Mammary epithelial cell (primary cell): ENCODE measurements at regions of chr6 and their contacts with region 1.

Region 1: DNA sequence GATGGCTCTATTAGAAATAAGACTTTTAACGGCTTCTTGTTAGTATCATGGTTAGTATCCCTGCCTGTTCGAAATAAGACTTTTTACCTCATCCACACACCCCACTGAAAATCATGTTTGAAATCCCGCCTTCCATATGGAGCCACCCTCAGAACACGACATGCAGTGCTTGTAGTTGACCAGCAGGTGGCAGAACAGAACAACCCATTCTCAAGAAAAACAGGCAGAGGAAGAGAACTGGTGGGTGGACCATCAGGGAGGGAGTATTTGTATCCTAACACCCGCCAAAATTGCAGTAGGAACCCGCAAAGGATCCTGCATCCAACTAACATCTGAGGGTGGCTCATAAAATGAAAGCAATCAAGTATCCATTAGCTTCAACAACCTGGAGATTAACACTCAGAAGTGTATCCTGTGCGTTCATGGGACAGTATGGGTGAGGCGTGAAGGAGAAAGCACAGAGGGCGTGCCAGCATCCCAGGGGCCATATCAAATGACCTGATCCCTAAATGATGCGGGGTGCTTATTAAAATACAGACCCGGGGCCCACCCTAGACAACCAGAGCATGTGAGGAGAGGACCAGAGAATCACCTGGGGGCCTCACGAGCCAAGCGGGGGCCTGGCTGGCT is 89.6 kb upstream of the NHSL1 start:
- DNase-seq: peak; percentile 55
- H3K4me3 ChIP-seq: no peak overlapping the region
- H3K27ac ChIP-seq: no peak overlapping the region
- H3K4me1 ChIP-seq: peaks cover 18% of the 10 kb centered on the region
- H3K27me3 ChIP-seq: no peaks in the 10 kb centered on the region
- CTCF ChIP-seq: peak; percentile 93 to 94

Region 2: GRCh38 chr6:138422861-138423260 is 166.1 kb before region 1 on chr6:
- CTCF ChIA-PET with region 1: no interaction called
- dilution Hi-C with region 1: no loop called
- in situ Hi-C with region 1: no loop called
- intact Hi-C with region 1: no loop called
- DNase-seq: no peak
- H3K4me3 ChIP-seq: no peak overlapping the region
- H3K27ac ChIP-seq: no peak overlapping the region
- H3K4me1 ChIP-seq: no peaks in the 10 kb centered on the region
- H3K27me3 ChIP-seq: no peaks in the 10 kb centered on the region
- CTCF ChIP-seq: no peak

Region 3: GRCh38 chr6:138509371-138509770 is 79.5 kb before region 1 on chr6:
- CTCF ChIA-PET with region 1: no interaction called
- dilution Hi-C with region 1: no loop called
- in situ Hi-C with region 1: no loop called
- intact Hi-C with region 1: loop called (anchors 5 kb)
- DNase-seq: peak; percentile 47
- H3K4me3 ChIP-seq: no peak overlapping the region
- H3K27ac ChIP-seq: no peak overlapping the region
- H3K4me1 ChIP-seq: no peaks in the 10 kb centered on the region
- H3K27me3 ChIP-seq: no peaks in the 10 kb centered on the region
- CTCF ChIP-seq: peak; percentile 64 to 68

Region 4: DNA sequence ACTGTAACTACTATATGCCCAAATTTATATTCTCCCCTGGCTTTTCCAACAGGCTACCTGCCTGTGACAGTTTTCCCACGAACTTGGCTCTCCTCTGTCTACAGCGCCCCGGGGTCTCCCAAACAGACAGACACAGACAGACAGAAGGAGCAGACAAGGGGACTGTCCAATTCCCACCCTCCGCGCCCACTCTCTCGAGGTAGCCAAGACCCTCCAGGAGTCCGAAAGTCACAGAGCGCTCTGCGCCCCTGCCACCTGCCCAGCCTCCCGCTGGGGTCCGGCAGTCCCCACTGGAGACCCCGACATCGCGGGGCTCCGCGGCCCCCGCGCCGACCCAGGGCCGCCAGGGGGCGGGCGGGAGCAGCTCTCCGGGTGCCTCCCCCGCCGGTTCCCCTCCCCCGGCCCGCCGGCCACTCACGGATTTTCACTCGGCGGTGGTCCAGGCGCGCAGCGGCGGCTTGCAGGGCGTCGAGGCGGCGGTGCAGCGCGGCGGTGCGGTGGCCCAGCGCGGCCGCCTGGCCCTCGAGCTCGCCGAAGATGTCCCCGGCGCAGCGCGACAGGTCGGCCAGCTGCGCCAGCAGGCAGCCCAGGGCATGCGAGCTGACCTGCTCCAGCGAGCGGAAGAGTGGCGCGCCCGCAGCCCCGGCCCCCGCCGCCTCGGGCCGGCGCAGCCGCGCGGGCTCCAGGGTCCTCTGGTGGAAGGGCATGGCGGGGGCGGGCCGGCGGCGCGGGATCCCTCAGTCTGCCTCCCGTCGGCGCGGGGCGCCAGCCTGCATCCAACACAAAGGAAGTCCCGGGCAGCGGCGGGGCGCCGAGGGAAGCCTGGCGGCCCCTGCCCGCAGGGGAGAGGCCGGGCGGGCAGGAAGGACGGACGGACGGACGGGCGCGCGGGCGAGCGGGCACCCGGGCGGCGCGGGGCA is 103.4 kb after region 1 on chr6:
- CTCF ChIA-PET with region 1: no interaction called
- dilution Hi-C with region 1: no loop called
- in situ Hi-C with region 1: loop called in 1 of 2 experiments (anchors 10 kb)
- intact Hi-C with region 1: loop called (anchors 1 kb)
- DNase-seq: peak; percentile 55
- H3K4me3 ChIP-seq: peak overlapping the region; percentile 65 to 89 (median 68)
- H3K27ac ChIP-seq: peak overlapping the region; percentile 91
- H3K4me1 ChIP-seq: peaks cover 16% of the 10 kb centered on the region
- H3K27me3 ChIP-seq: no peaks in the 10 kb centered on the region
- CTCF ChIP-seq: peak; percentile 56 to 74

Region 5: DNA sequence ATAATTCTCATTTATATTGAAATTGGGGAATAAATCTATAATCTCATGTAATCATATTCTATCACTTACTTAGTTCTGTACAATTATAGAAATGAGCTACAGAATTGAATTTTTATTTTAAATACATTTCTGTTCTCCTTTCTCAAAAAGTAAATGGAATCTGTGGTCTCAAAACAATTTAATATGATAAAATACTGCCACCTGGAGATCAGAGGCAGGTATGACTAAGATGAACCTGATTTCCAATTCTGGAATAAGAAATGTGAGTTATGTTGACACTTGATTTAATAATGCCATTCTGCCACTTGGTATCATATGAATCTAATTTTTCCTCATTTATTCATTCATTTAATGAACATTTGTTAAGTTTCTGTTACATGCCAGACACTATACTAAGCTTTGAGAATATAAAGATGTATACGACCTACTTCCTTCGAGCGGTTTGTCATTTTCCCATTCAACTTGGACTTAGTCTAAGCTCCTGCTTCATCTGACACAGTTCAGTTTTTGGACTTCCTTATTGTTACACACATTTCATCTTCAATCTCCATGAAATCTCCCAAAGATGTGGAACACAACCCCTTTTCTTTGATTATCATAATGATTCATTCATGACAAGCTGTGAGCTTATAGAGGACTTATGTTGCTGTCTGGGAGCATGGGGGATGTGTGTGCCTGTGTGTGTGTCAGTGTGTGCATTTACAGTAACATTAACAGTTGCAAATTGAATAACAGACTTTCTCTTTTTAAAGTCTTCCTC is 177.2 kb after region 1 on chr6:
- CTCF ChIA-PET with region 1: interaction called, 3 read pairs
- dilution Hi-C with region 1: no loop called
- in situ Hi-C with region 1: loop called (anchors 5 to 10 kb)
- intact Hi-C with region 1: loop called (anchors 1 kb)
- DNase-seq: peak; percentile 20
- H3K4me3 ChIP-seq: no peak overlapping the region
- H3K27ac ChIP-seq: no peak overlapping the region
- H3K4me1 ChIP-seq: no peaks in the 10 kb centered on the region
- H3K27me3 ChIP-seq: no peaks in the 10 kb centered on the region
- CTCF ChIP-seq: peak; percentile 54 to 64

Region 6: GRCh38 chr6:139364302-139364981 is 775.5 kb after region 1 on chr6:
- CTCF ChIA-PET with region 1: interaction called, 12 read pairs
- dilution Hi-C with region 1: no loop called
- in situ Hi-C with region 1: no loop called
- intact Hi-C with region 1: loop called (anchors 5 kb)
- DNase-seq: peak; percentile 27
- H3K4me3 ChIP-seq: no peak overlapping the region
- H3K27ac ChIP-seq: no peak overlapping the region
- H3K4me1 ChIP-seq: peaks cover 9% of the 10 kb centered on the region
- H3K27me3 ChIP-seq: no peaks in the 10 kb centered on the region
- CTCF ChIP-seq: peak; percentile 41 to 53